Right ventricle myocardium inferior (tissue), 1 donor: ENCODE measurements at regions of chr6 and their contacts with region 1.

Region 1: GRCh38 chr6:19851241-19852089 is 14.3 kb downstream of the ID4 start:
- DNase-seq: no peak
- ATAC-seq: peak; percentile 87

Region 2: GRCh38 chr6:18595774-18596530 is 1255.5 kb before region 1 on chr6:
- intact Hi-C with region 1: loop called (anchors 5 kb)
- DNase-seq: no peak
- ATAC-seq: peak; percentile 83

Region 3: GRCh38 chr6:18742406-18742805 is 1109.1 kb before region 1 on chr6:
- intact Hi-C with region 1: loop called (anchors 10 kb)
- DNase-seq: no peak
- ATAC-seq: no peak

Region 4: DNA sequence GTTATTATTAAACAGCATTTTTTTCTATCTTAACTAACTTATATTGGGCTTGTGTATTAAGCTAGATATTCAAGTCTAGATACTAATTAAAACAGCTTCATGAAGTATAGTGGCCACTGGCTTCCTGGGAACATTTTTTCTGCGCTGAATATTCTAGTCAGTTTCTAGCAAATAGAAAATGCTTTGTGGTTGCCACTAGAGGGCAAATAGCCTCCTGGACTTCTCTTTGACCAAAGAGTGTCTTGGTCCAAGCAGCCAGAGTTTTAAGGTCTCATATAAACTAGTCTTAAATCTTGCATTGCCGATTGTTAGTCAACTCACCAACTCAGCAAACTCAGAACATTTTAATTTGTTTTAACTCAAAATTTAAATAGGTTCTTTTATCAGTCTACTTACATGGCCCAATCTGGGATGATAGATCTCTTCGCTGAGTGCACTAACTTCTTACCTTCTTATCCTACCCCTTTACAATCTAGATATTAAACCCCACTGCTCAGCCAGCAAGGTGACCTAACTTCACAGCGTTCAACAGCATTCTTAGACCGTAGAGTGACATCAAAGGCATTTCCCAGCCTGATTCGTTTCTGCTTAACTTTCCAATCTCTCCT is 38.8 kb before region 1 on chr6:
- intact Hi-C with region 1: loop called (anchors 5 kb)
- DNase-seq: no peak
- ATAC-seq: no peak